Breast epithelium (tissue), 4 donors: ENCODE measurements at regions of chr3 and their contacts with region 1.

Region 1: GRCh38 chr3:16177962-16178627 is 3.6 kb downstream of the GALNT15 start:
- DNase-seq: peak; percentile 58 to 75
- H3K4me3 ChIP-seq: peak overlapping the region; percentile 43 to 71 (median 69)
- H3K27ac ChIP-seq: peak overlapping the region in 1 of 2 donors; percentile 3
- H3K4me1 ChIP-seq: peaks cover 5 to 9% of the 10 kb centered on the region in 2 donors
- H3K27me3 ChIP-seq: no peaks in the 10 kb centered on the region
- CTCF ChIP-seq: peak; percentile 78 to 96 (median 91)
- POLR2A ChIP-seq: no peak

Region 2: GRCh38 chr3:16060358-16060852 is 117.7 kb before region 1 on chr3:
- intact Hi-C with region 1: loop called (anchors 5 kb)
- DNase-seq: peak in 1 of 2 donors; percentile 75
- H3K4me3 ChIP-seq: no peak overlapping the region
- H3K27ac ChIP-seq: peak overlapping the region; percentile 82 to 86
- H3K4me1 ChIP-seq: no peaks in the 10 kb centered on the region
- H3K27me3 ChIP-seq: no peaks in the 10 kb centered on the region
- CTCF ChIP-seq: peak in 1 of 3 donors; percentile 27
- POLR2A ChIP-seq: no peak